GM13976 (cell line): ENCODE measurements at regions of chr9 and their contacts with region 1.

Region 1: DNA sequence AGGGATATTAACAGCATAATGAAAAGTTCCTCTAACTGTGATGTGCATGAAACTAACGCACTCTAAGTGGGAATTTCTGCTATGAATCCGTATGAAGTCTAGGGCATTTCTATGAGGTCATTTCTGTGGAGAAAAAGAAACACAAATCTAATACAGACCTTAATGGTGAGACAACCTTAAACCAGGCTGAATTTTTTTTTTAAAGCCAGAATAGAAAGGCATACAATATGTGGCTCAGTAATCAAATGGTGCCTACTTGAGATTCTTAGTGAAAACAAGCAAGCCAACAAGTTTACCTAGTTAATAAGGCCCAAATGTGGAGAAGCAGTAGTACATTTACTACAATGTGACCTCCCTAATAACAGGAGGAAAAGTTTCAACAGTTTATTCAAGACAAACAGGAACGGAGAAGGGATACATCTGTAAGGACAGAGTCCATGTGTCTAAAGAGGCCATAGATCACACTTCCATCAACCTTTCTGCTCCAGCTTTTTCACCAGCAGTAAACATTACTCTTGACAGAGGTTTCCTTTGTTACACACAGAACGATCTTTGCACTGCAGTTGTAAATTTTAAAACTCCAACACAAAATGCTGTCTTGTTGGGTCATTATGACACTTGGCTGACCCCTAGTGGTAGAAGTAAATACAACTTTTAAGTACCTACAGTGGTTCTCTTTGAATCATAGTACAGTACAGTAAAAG is 26.2 kb downstream of the CARNMT1 start:
- DNase-seq: peak; percentile 40
- CTCF ChIP-seq: peak; percentile 47

Region 2: GRCh38 chr9:74773886-74774479 is 227.9 kb before region 1 on chr9:
- in situ Hi-C with region 1: loop called (anchors 5 kb)
- DNase-seq: peak; percentile 58
- CTCF ChIP-seq: peak; percentile 90